Heart right ventricle (tissue), 16 donors: ENCODE measurements at regions of chr17 and their contacts with region 1.

Region 1: DNA sequence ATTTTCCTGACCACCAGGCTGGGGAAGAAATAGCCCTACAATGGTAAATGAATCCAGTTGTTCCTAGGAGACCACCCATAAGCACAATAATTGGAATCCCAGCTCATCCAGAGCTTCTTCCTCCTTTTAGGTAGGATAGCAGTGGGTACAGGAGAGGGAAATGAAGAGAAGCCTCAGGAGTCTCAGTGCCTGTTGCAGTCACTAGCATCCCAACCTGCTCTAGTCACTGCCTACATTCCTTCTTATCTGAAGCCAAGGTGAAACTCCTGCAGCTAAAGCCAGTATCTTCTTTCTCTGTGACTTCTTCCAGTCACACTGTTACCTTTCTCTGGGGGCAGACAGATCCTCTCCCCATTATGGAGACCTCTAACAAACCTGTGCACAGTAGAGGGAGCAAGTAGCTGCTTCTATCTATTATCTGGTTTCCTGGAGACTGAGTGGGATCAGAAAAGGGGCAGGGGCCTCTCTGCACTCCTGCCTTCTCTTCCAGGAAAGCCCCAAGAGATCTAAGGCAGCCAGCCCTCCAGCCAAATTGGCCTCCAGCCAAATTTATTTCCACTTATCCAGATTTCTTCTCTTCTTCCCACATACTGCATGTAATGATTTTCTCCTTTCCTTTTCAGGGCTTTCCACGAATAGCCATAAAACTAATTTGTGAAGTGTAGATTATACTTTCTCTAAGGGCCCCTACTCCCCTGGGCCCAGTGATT is 85.5 kb downstream of the SSH2 start:
- DNase-seq: peak in 1 of 2 donors; percentile 37
- ATAC-seq: peak in 5 of 8 donors; percentile 27 to 79 (median 47)
- H3K4me3 ChIP-seq: no peak overlapping the region
- H3K27ac ChIP-seq: no peak overlapping the region
- H3K4me1 ChIP-seq: peaks cover 0 to 33% (median 19%) of the 10 kb centered on the region in 9 donors
- H3K27me3 ChIP-seq: no peaks in the 10 kb centered on the region
- CTCF ChIP-seq: peak in 2 of 9 donors; percentile 13 to 30

Region 2: DNA sequence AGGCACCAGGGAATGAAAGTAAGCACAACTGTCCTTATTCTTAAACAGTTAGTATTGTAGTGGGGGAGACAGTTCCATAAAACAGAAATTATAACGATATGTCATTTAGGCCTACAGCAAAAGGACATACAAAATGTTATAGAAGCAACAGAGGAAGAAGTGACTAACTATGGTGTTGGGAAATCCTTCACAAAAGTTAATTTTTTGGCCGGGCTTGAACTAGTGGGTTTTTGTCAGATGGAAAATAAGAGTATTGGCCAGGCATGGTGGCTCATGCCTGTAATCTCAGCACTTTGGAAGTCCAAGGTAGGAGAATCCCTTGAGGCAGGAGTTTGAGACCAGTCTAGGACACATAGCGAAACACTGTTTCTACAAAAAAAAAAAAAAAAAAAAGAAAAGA is 42.2 kb before region 1 on chr17:
- intact Hi-C with region 1: no loop called
- DNase-seq: no peak
- ATAC-seq: no peak
- H3K4me3 ChIP-seq: no peak overlapping the region
- H3K27ac ChIP-seq: no peak overlapping the region
- H3K4me1 ChIP-seq: no peaks in the 10 kb centered on the region
- H3K27me3 ChIP-seq: no peaks in the 10 kb centered on the region
- CTCF ChIP-seq: no peak

Region 3: DNA sequence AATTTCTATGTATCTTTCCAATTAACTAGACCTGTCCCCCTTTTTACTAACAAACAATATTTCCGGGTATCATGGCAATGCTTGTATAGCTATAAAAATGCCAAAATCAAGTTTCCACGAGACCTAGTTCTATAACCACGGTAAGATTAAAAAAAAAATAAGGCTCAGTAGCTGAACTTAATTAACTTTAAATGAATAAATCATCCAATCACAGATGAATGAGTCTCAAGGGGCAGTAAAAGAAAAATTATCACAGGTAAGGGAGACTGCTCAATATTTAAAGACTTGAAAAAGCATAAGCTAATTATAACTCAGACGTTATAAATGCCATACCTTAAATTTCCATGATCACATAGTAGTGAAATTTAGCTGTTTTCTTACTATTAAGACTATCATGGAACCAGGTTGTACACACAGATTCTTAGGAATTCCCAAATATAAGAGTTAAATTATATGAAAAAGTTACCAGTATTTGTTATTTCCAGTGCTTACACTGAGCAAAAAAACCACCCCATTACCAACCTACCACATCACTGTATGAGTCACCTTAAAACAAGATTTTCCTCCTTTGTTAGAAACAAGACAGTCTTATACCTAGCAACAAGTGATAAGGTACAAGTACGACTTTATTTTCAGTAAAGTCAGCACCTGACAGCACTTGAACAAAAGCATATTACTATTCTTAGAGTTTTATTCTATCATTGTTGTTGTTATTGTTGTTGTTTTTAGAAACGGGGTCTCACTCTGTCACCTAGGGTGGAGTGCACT is 64.9 kb after region 1 on chr17:
- intact Hi-C with region 1: loop called in 1 of 10 experiments (anchors 5 kb)
- DNase-seq: no peak
- ATAC-seq: no peak
- H3K4me3 ChIP-seq: no peak overlapping the region
- H3K27ac ChIP-seq: no peak overlapping the region
- H3K4me1 ChIP-seq: peaks cover 0 to 6% (median 0%) of the 10 kb centered on the region in 9 donors
- H3K27me3 ChIP-seq: no peaks in the 10 kb centered on the region
- CTCF ChIP-seq: no peak